Prostate gland (tissue), 2 donors: ENCODE measurements at regions of chr6 and their contacts with region 1.

Region 1: DNA sequence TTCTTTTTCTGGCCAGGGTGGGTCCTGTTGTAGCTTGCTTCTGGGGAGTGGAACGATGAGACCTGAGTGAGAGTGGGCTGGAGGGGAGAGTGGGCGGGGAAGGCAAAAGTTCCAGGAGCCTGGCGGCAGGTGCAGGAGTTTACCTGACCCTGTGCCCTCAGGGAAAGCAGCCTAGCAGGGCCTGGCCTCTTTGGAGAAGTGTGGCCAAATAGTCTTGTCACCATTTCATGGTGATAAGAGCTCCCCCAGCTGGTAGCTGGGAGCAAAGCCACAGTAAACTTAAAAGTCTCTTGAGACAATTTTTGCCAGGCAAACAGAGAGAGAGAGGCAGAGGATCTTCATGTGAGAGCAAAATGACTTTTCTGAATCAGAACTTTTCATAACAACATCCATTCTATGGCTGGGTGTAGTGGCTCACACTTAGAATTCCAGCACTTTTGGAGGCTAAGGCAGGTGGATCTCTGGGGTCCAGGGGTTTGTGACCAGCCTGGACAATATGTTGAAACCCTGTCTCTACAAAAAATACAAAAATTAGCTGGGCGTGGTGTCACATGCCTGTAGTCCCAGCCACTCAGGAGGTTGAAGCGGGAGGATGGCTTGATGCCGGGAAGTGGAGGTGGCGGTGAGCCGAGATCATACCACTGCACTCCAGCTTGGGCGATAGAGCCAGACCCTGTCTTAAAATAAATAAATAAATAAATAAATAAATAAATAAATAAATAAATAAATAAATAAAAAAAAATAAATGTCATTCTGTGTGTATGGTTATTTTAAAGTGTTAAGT is 161.8 kb upstream of the SCGN start:
- DNase-seq: peak; percentile 68
- H3K4me3 ChIP-seq: no peak overlapping the region
- H3K27ac ChIP-seq: no peak overlapping the region
- H3K4me1 ChIP-seq: no peaks in the 10 kb centered on the region
- H3K27me3 ChIP-seq: no peaks in the 10 kb centered on the region
- CTCF ChIP-seq: peak; percentile 32 to 84 (median 76)
- POLR2A ChIP-seq: no peak

Region 2: DNA sequence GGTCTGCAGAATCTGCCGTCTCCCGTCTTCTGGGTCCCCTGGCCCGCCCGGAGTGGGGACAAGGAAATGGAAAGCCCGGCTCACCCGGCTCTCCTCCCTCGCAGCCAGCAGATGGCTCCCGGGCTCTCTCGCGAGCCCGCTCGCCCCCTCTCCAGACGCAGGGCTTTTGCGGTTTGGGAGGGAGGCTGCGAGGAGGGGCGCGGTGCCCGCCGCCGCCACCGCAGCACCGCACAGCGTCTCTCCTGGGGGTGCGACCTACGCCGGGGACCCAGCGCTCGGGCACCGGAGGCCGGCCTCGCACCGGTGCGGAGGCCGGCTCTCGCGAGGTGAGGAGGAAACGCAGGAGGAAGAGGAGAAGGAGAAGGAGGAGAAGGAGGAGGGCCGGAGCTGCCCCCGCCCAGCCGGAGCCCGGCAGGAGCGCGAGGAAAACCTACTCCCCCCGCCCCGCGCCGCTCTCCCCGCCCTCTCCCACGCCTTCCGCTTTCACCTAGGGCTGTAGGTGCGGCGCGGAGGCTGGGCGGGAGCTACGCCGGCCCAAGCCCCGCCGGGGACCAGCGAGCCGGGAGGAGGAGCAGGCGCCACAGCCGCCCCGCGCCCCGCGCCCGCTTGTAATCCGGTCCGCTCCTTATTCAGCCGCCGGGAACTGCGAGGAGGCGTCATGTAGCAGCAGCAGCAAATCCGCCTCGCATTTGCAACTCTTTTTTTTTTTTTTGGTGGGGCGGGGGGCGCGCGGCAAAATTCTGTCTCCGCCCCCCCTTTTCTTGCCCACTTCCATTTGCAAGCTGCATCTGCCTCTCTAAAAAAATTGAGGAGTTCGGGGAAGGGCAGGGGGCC is 211.1 kb before region 1 on chr6 and contains the start of gene CARMIL1:
- intact Hi-C with region 1: loop called (anchors 1 kb)
- DNase-seq: peak; percentile 89
- H3K4me3 ChIP-seq: peak within 1 kb of the TSS; percentile 71 to 78
- H3K27ac ChIP-seq: peak within 1 kb of the TSS; percentile 79 to 85
- H3K4me1 ChIP-seq: peaks cover 6% of the 10 kb centered on the region
- H3K27me3 ChIP-seq: no peaks in the 10 kb centered on the region
- CTCF ChIP-seq: peak; percentile 49 to 79 (median 74)
- POLR2A ChIP-seq: peak; percentile 45
- total RNA-seq, gene CARMIL1: 12.9 to 71.7 TPM

Region 3: DNA sequence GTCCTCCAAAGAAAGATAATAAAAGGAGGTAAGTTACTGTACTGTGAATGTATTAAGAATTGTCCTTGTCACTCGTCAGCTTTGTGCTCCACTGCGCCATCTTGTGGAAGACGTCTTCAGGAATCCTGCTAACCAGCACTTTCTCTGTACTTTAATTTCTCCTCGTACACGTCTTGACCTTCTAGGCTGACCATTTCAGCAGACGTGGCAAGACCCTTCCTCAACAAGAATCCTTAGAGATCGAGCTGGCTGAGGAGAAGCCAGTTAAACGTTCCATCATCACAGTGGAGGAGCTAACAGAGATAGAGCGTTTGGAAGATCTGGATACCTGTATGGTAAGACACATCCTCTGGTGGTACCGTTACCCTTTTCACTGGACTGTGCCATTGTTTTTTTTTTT is 66.3 kb after region 1 on chr6:
- intact Hi-C with region 1: loop called (anchors 10 kb)
- DNase-seq: peak; percentile 70
- H3K4me3 ChIP-seq: no peak overlapping the region
- H3K27ac ChIP-seq: no peak overlapping the region
- H3K4me1 ChIP-seq: no peaks in the 10 kb centered on the region
- H3K27me3 ChIP-seq: no peaks in the 10 kb centered on the region
- CTCF ChIP-seq: peak; percentile 39 to 75 (median 64)
- POLR2A ChIP-seq: no peak

Region 4: DNA sequence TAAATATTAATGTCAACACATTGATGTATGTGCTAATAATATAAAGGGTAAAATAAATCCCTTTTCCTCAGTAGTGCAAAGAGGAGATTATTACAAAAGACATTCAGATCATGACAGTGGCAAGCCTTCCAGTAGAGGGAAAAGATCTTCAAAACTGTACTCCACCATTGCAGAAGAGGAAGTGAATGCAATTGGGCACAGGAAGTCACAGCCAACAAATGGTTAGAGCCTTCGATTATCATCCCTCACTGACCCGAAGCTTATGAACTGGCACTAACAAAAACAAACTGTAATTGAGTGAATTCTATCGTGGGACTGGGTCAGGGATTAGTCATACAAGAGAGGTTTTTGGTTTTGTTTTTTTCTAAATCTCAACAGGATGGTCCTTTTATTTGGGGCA is 122.5 kb after region 1 on chr6:
- intact Hi-C with region 1: no loop called
- DNase-seq: no peak
- H3K4me3 ChIP-seq: no peak overlapping the region
- H3K27ac ChIP-seq: no peak overlapping the region
- H3K4me1 ChIP-seq: no peaks in the 10 kb centered on the region
- H3K27me3 ChIP-seq: no peaks in the 10 kb centered on the region
- CTCF ChIP-seq: no peak
- POLR2A ChIP-seq: no peak

Region 5: GRCh38 chr6:25774120-25774715 is 284.0 kb after region 1 on chr6:
- intact Hi-C with region 1: no loop called
- DNase-seq: no peak
- H3K4me3 ChIP-seq: no peak overlapping the region
- H3K27ac ChIP-seq: no peak overlapping the region
- H3K4me1 ChIP-seq: no peaks in the 10 kb centered on the region
- H3K27me3 ChIP-seq: no peaks in the 10 kb centered on the region
- CTCF ChIP-seq: no peak
- POLR2A ChIP-seq: no peak

Region 6: DNA sequence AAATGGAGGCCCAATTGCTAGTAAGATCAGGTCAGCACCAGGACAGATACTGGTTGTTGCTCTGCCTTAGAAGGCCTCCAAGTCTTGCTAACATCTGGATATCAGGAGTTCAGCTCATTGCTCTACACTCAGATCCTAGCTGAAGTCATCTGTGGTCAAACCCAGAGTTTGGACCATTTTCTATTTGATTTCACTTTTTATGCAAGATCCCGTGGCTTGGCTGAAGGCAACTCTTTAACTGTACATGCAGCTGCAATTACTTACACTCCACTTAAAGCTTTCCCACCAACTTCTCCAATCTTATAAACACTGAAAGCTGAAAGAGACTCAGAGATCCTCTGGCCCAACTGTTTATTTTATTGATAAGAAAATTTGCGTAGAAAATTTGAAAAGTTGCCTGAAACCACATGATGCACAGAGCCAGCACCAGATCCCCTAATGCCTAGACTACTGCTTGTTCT is 437.6 kb after region 1 on chr6:
- intact Hi-C with region 1: no loop called
- DNase-seq: no peak
- H3K4me3 ChIP-seq: no peak overlapping the region
- H3K27ac ChIP-seq: no peak overlapping the region
- H3K4me1 ChIP-seq: no peaks in the 10 kb centered on the region
- H3K27me3 ChIP-seq: no peaks in the 10 kb centered on the region
- CTCF ChIP-seq: no peak
- POLR2A ChIP-seq: no peak